ENCODE measurements at regions of chr1 and their contacts with region 1.

Region 1: DNA sequence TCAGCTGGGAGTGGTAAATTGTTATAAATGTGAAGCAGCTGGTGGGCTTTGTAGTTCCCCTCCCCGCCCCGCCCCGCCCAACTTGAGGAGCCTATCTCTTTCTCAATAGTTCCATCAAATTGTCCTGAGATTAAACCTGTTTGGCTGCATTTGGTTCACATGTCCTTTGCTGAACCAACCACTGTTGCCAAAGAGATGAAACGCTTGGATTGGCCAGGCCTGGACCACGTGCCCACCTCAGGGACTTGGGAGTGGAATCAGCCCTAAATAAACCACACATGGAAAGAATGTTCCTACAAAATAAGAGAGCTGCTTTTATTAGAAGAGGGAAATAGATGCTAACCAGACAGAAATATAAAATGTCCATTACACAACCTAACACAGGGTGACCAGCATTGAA is 424.9 kb upstream of the KAZN start:
- DNase-seq: no peak
- H3K4me3 ChIP-seq: no peak overlapping the region
- H3K27ac ChIP-seq: no peak overlapping the region
- H3K4me1 ChIP-seq: no peaks in the 10 kb centered on the region
- H3K27me3 ChIP-seq: no peaks in the 10 kb centered on the region
- CTCF ChIP-seq: no peak

Region 2: DNA sequence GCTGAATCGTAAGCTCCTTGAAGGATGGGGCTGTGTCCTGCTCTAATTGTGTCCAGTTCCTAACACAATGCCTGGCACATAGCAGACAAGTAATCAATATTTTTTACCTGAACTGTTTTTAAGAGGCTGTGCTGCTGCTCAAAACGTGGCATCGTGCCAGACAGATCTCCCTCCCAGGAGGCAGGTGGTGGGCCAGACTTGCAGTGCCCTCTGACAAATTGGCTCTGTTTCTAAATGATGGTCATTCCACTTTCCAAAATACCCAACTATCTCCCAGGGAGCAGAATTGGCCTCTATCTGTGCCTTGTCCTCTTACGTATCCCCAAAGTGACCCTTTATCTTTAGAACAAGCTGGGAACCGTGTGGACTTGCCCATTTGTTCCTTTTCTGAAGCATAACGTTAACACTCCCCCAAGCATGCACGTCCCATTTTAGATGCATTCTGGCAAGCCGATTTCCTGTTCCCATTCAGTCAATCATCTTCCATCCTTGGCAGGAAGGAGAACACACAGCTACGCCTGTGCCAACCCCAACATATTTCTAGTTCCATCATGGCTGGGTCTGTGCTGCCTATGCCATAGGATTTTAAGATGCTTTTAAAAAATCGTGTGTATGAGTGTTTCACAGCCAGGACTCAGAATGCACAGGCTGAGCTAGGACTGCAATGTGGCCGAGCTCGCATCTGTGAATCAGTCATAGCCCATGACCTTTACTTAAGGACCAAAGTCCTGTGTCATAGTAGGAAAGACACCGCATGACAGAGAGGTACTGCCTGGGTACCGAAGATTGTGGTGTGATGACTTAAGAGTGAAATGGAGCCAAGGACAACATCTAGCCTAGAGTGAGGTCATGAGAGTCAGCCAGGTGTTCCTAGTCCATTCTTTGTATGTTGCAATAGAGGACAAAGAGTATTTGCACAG is 65.0 kb before region 1 on chr1:
- CTCF ChIA-PET with region 1: no interaction called
- dilution Hi-C with region 1: loop called (anchors 5 kb)
- in situ Hi-C with region 1: no loop called
- intact Hi-C with region 1: no loop called
- DNase-seq: peak; percentile 8
- H3K4me3 ChIP-seq: no peak overlapping the region
- H3K27ac ChIP-seq: no peak overlapping the region
- H3K4me1 ChIP-seq: no peaks in the 10 kb centered on the region
- H3K27me3 ChIP-seq: no peaks in the 10 kb centered on the region
- CTCF ChIP-seq: no peak